ENCODE measurements at regions of chr3 and their contacts with region 1.

Region 1: DNA sequence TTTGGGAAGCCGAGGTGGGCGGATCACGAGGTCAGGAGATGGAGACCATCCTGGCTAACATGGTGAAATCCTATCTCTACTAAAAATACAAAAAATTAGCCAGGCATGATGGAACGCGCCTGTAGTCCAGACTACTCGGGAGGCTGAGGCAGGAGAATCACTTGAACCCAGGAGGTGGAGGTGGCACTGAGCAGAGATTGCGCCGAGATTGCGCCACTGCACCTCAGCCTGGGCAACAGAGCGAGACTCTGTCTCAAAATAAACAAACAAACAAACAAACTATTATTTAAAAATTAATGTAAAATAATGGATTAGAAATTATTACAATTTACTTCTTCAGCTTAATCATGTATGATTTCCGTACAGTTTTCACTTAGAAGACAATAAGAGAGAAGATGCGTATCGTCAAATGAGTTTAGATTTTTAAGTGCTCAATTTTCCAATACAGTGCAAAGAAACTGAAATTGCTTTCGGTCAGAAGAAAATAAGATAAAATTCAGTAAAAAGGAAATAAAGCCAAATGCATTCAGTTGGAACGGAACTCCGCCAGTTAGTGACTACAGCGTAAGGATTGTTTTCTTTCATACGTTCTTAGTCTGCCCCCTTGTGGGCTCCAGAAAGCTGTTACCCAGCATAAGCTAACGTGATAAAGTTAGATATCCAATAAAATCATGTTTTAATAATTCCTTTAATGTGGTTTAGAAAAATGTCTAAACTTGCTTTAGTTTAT is 24.8 kb downstream of the AADAC start:
- DNase-seq: peak in 1 of 2 donors; percentile 70
- ATAC-seq: peak in 7 of 8 donors; percentile 71 to 92 (median 87)
- H3K4me3 ChIP-seq: peak overlapping the region in 6 of 10 donors; percentile 3 to 40 (median 27)
- H3K27ac ChIP-seq: peak overlapping the region in 1 of 10 donors; percentile 8
- H3K4me1 ChIP-seq: peaks cover 0 to 18% (median 7%) of the 10 kb centered on the region in 9 donors
- H3K27me3 ChIP-seq: peaks cover 0 to 3% (median 0%) of the 10 kb centered on the region in 7 donors
- CTCF ChIP-seq: peak; percentile 60 to 95 (median 81)

Region 2: DNA sequence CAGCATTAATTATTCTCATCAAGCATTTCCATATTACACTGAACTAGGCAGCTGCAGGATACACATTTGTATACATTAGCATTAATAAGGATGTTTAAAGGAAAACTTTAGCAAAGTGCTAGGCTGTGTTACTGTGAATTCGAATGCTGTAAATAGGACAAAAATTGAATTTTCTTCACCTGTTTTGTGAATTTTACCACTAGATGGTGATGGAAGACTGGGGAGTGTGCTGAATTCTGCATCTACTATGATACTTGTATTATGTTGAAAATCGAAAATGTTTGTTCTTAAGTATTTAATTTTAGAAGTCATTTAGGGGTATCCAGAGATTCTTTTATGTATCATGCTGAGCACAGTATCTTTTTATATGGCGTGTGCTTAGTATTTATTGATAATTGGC is 548.1 kb before region 1 on chr3:
- intact Hi-C with region 1: loop called in 1 of 10 experiments (anchors 5 kb)
- DNase-seq: no peak
- ATAC-seq: no peak
- H3K4me3 ChIP-seq: no peak overlapping the region
- H3K27ac ChIP-seq: no peak overlapping the region
- H3K4me1 ChIP-seq: no peaks in the 10 kb centered on the region
- H3K27me3 ChIP-seq: no peaks in the 10 kb centered on the region
- CTCF ChIP-seq: peak in 7 of 9 donors; percentile 22 to 50 (median 47)

Region 3: GRCh38 chr3:151468284-151468917 is 370.3 kb before region 1 on chr3:
- intact Hi-C with region 1: loop called in 3 of 10 experiments (anchors 1 to 10 kb)
- DNase-seq: peak in 1 of 2 donors; percentile 45
- ATAC-seq: peak in 6 of 8 donors; percentile 43 to 76 (median 70)
- H3K4me3 ChIP-seq: no peak overlapping the region
- H3K27ac ChIP-seq: no peak overlapping the region
- H3K4me1 ChIP-seq: peaks cover 0 to 5% (median 0%) of the 10 kb centered on the region in 9 donors
- H3K27me3 ChIP-seq: peaks cover 0 to 20% (median 0%) of the 10 kb centered on the region in 7 donors
- CTCF ChIP-seq: peak; percentile 73 to 92 (median 81)

Region 4: DNA sequence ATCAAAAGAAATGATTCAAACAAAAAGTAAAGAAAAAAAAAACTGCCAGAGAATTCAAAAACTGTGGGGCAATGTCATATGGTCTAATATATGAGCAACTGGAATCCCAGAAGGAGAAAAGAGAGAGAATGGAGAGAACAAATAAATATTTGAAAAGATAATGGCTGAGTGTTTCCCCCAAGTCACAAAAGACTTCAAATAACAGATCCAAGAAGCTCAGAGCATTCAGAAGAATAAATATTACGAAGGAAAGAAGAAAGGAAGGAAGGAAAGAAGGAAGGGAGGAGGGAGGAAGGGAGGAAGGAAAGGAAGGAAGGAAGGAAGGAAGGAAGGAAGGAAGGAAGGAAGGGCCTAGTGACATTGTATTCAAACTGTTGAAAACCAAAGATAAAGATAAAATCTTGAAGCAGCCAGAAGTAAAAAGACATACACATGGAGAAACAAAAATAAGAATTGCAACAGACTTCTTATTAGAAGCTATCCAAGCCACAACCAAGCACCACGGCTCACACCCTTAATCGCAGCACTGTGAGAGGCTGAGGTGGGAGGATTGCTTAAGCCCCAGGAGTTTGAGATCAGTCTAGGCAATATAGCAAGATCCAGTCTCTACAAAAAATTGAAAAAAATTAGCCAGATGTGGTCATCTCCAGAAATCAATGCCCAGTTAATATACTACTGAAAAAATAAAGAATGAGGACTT is 259.0 kb before region 1 on chr3:
- intact Hi-C with region 1: no loop called
- DNase-seq: no peak
- ATAC-seq: peak in 2 of 8 donors; percentile 55 to 73
- H3K4me3 ChIP-seq: no peak overlapping the region
- H3K27ac ChIP-seq: peak overlapping the region in 1 of 10 donors; percentile 27
- H3K4me1 ChIP-seq: no peaks in the 10 kb centered on the region
- H3K27me3 ChIP-seq: no peaks in the 10 kb centered on the region
- CTCF ChIP-seq: no peak

Region 5: DNA sequence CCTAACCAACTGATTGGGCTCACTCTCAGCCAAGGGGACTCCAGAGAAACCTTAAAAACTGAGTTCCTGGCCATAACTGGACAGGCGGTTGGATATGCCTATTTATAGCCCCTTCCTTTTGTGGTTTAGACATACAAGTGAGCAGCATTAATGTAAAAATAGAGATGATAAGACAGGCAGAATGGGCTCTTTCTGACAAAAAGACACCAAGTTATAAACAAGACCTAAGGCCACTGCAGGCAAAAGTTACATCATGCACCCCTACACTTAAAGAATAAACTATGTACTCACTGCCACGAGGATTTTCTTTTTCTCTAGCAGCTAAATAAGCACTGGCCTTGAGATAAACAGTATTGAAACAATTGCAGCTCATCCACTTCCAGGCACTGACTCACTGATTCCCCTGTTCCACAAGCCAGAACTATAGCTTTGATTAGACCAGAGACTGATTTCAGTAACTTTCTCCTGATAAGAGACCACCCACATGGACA is 64.8 kb after region 1 on chr3:
- intact Hi-C with region 1: loop called in 1 of 10 experiments (anchors 10 kb)
- DNase-seq: no peak
- ATAC-seq: peak; percentile 26 to 75 (median 64)
- H3K4me3 ChIP-seq: no peak overlapping the region
- H3K27ac ChIP-seq: peak overlapping the region in 7 of 10 donors; percentile 2 to 54 (median 42)
- H3K4me1 ChIP-seq: peaks cover 4 to 54% (median 37%) of the 10 kb centered on the region in 9 donors
- H3K27me3 ChIP-seq: no peaks in the 10 kb centered on the region
- CTCF ChIP-seq: no peak

Region 6: DNA sequence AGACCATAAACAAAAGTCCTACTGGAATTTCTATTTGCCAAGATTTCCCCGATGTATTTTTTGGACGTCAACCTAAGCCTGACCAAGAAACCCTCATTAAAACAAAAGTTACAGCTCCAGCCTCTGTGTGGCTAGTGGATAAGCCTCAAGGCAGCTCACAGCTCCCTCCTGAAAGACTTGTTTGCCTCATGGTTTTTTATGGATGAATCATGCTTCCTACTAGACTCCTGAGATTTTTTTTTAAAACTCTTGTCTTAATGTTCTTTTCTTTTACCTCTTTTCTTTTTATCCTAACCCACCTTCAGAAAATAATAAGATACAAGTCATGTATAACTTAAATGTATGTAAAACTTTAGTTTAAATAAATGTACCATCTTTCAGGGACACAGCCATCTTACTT is 87.1 kb after region 1 on chr3:
- intact Hi-C with region 1: loop called in 1 of 10 experiments (anchors 5 kb)
- DNase-seq: no peak
- ATAC-seq: no peak
- H3K4me3 ChIP-seq: no peak overlapping the region
- H3K27ac ChIP-seq: no peak overlapping the region
- H3K4me1 ChIP-seq: peaks cover 0 to 12% (median 0%) of the 10 kb centered on the region in 9 donors
- H3K27me3 ChIP-seq: no peaks in the 10 kb centered on the region
- CTCF ChIP-seq: no peak